CD8-positive, alpha-beta T cell (primary cell): ENCODE measurements at regions of chr14 and their contacts with region 1.

Region 1: DNA sequence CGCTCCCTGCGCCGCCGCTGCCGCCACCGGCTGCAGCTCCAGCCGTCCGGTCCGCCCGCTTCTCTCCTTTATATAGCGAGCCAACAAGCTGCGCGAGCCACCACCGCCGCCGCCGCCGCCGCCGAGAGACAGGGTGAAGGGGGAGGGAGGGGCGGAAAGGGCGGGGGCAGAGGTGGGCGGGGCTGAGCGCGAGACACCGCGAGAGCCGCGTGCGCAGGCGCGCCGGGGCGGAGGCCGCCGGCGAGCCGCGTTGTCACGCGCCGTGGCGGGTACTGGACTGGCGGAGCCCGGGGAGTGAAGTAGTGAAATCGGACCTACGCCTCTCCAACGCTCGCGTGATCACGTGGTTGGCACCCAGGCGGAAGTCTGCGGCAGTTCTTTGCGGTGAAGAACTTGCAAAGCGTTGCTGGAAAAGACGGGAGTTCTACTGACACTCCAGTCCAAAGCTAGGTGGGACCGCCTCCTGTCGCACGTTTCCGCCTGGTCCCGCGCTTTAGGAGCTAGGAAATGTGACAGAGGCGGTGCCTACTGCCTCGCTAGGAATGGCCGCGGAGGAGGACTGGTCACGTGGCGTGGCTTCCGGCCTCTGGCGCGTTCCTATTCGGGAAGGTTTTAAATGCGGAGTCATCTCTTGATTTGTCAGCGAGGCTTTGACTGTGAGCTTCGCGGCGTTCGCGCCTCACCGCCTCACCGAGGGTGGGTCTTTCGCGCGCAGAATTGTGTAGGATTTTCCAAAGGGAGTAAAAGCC is at the start of gene GTF2A1:
- DNase-seq: peak; percentile 91 to 98 (median 94)
- ATAC-seq: peak; percentile 69
- H3K4me3 ChIP-seq: peak within 1 kb of the TSS; percentile 93 to 94
- H3K4me3 Mint-ChIP-seq: peak within 1 kb of the TSS; percentile 99
- H3K27ac ChIP-seq: peak within 1 kb of the TSS; percentile 95 to 97
- H3K27ac Mint-ChIP-seq: peak within 1 kb of the TSS; percentile 100
- H3K4me1 ChIP-seq: peaks cover 31% of the 10 kb centered on the region
- H3K4me1 Mint-ChIP-seq: peaks cover 38% of the 10 kb centered on the region
- H3K27me3 ChIP-seq: no peaks in the 10 kb centered on the region
- H3K27me3 Mint-ChIP-seq: no peaks in the 10 kb centered on the region
- CTCF ChIP-seq: no peak
- total RNA-seq, gene GTF2A1: 12.6 to 14.6 TPM

Region 2: GRCh38 chr14:80941241-80942182 is 279.5 kb before region 1 on chr14 and contains the start of gene CEP128:
- CTCF ChIA-PET with region 1: no interaction called
- POLR2A ChIA-PET with region 1: interaction called, 12 read pairs
- intact Hi-C with region 1: loop called (anchors 1 to 5 kb)
- DNase-seq: peak; percentile 66 to 91 (median 83)
- ATAC-seq: peak; percentile 82
- H3K4me3 ChIP-seq: peak within 1 kb of the TSS; percentile 78
- H3K4me3 Mint-ChIP-seq: peak within 1 kb of the TSS; percentile 87
- H3K27ac ChIP-seq: peak within 1 kb of the TSS; percentile 26 to 36
- H3K27ac Mint-ChIP-seq: peak within 1 kb of the TSS; percentile 92
- H3K4me1 ChIP-seq: peaks cover 15% of the 10 kb centered on the region
- H3K4me1 Mint-ChIP-seq: peaks cover 29% of the 10 kb centered on the region
- H3K27me3 ChIP-seq: no peaks in the 10 kb centered on the region
- H3K27me3 Mint-ChIP-seq: peaks cover 2% of the 10 kb centered on the region
- CTCF ChIP-seq: no peak
- total RNA-seq, gene CEP128: 7.6 to 9.8 TPM

Region 3: GRCh38 chr14:81055971-81056370 is 165.0 kb before region 1 on chr14:
- CTCF ChIA-PET with region 1: no interaction called
- POLR2A ChIA-PET with region 1: no interaction called
- intact Hi-C with region 1: no loop called
- DNase-seq: no peak
- ATAC-seq: no peak
- H3K4me3 ChIP-seq: no peak overlapping the region
- H3K4me3 Mint-ChIP-seq: no peak overlapping the region
- H3K27ac ChIP-seq: no peak overlapping the region
- H3K27ac Mint-ChIP-seq: no peak overlapping the region
- H3K4me1 ChIP-seq: no peaks in the 10 kb centered on the region
- H3K4me1 Mint-ChIP-seq: no peaks in the 10 kb centered on the region
- H3K27me3 ChIP-seq: no peaks in the 10 kb centered on the region
- H3K27me3 Mint-ChIP-seq: no peaks in the 10 kb centered on the region
- CTCF ChIP-seq: no peak

Region 4: DNA sequence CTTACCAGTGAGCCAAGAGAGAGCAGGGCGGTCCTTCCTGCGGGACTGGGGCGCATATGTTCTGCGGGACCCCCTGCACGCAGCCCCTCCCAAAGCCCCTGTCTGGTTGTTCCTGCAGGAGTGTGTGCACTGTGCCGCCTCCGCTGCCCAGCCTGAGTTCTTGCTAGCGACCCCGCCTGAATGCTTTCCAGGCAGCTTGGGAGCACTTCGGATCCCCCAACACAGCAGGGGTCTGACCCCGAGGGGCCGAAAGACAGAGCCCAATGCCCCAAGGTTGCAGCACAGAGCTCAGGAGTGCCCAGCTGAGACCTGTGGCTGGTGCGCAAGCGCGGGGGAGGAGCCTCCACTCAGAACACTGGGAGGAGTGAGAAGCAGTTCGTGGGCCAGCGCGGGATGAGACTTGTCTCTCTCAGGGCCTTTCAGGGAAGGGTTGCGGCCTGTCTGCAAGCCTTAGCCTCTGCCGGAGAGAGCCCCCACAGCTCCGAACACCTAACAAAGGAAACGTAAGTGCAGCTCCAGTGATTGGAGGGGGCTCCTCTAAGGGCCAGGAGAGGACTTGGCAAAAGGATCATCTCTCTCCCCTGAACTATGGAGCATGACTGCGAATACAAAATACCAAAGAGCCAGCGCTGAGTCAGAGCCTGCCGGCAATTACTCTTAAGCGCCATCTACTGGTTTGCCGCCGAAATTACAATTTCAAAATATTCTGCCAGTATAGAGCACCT is 50.7 kb before region 1 on chr14:
- CTCF ChIA-PET with region 1: interaction called, 3 read pairs
- POLR2A ChIA-PET with region 1: interaction called, 17 read pairs
- intact Hi-C with region 1: loop called (anchors 1 kb)
- DNase-seq: peak; percentile 72 to 92 (median 89)
- ATAC-seq: peak; percentile 97
- H3K4me3 ChIP-seq: peak overlapping the region; percentile 67 to 70
- H3K4me3 Mint-ChIP-seq: peak overlapping the region; percentile 94
- H3K27ac ChIP-seq: peak overlapping the region; percentile 53 to 81
- H3K27ac Mint-ChIP-seq: peak overlapping the region; percentile 97
- H3K4me1 ChIP-seq: peaks cover 12% of the 10 kb centered on the region
- H3K4me1 Mint-ChIP-seq: peaks cover 20% of the 10 kb centered on the region
- H3K27me3 ChIP-seq: no peaks in the 10 kb centered on the region
- H3K27me3 Mint-ChIP-seq: no peaks in the 10 kb centered on the region
- CTCF ChIP-seq: peak; percentile 77

Region 5: DNA sequence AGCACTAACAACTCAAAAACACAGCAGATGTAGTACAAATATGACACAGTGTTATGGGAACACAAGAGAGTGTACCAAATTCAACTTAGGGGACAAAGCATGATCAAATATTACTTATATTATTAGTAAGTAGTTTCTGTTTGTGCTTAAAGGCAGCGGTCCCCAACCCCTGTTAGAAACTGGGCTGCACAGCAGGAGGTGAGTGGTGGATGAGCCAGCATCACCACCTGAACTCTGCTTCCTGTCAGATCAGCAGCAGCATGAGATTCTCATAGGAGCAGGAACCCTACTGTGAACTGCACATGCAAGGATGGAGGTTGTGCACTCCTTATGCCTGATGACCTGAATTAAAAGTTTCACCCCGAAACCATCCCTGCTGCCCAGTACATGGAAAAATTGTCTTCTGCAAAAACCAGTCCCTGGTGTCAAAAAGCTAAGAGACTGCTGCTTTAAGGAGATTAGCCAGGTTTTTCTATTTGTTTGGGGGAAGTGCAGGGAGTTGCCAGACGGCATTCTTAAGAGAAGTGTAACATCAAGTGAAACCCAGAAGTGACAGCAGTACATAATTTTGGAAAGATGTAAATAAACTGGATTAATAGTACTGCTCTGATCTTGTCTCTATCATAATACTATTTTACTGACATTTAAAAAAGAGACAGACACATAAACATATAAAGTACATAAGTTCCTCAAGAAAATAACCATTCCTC is 26.9 kb before region 1 on chr14:
- CTCF ChIA-PET with region 1: no interaction called
- POLR2A ChIA-PET with region 1: interaction called, 6 read pairs
- intact Hi-C with region 1: loop called in 1 of 2 experiments (anchors 2 kb)
- DNase-seq: no peak
- ATAC-seq: peak; percentile 34
- H3K4me3 ChIP-seq: no peak overlapping the region
- H3K4me3 Mint-ChIP-seq: no peak overlapping the region
- H3K27ac ChIP-seq: no peak overlapping the region
- H3K27ac Mint-ChIP-seq: peak overlapping the region; percentile 75
- H3K4me1 ChIP-seq: peaks cover 15% of the 10 kb centered on the region
- H3K4me1 Mint-ChIP-seq: peaks cover 51% of the 10 kb centered on the region
- H3K27me3 ChIP-seq: no peaks in the 10 kb centered on the region
- H3K27me3 Mint-ChIP-seq: no peaks in the 10 kb centered on the region
- CTCF ChIP-seq: no peak

Region 6: GRCh38 chr14:81464247-81465002 is 243.4 kb after region 1 on chr14:
- CTCF ChIA-PET with region 1: no interaction called
- POLR2A ChIA-PET with region 1: interaction called, 9 read pairs
- intact Hi-C with region 1: loop called in 1 of 2 experiments (anchors 1 kb)
- DNase-seq: peak; percentile 26 to 84 (median 58)
- ATAC-seq: peak; percentile 81
- H3K4me3 ChIP-seq: peak overlapping the region; percentile 63 to 68
- H3K4me3 Mint-ChIP-seq: peak overlapping the region; percentile 86
- H3K27ac ChIP-seq: peak overlapping the region; percentile 55 to 86
- H3K27ac Mint-ChIP-seq: peak overlapping the region; percentile 87
- H3K4me1 ChIP-seq: no peaks in the 10 kb centered on the region
- H3K4me1 Mint-ChIP-seq: peaks cover 10% of the 10 kb centered on the region
- H3K27me3 ChIP-seq: no peaks in the 10 kb centered on the region
- H3K27me3 Mint-ChIP-seq: no peaks in the 10 kb centered on the region
- CTCF ChIP-seq: peak; percentile 95

Region 7: GRCh38 chr14:81474148-81474492 is 253.1 kb after region 1 on chr14:
- CTCF ChIA-PET with region 1: no interaction called
- POLR2A ChIA-PET with region 1: interaction called, 4 read pairs
- intact Hi-C with region 1: loop called in 1 of 2 experiments (anchors 5 kb)
- DNase-seq: peak in 2 of 9 experiments; percentile 29 to 58
- ATAC-seq: peak; percentile 62
- H3K4me3 ChIP-seq: peak overlapping the region; percentile 10 to 31
- H3K4me3 Mint-ChIP-seq: peak overlapping the region; percentile 77
- H3K27ac ChIP-seq: peak overlapping the region; percentile 34 to 80
- H3K27ac Mint-ChIP-seq: peak overlapping the region; percentile 91
- H3K4me1 ChIP-seq: peaks cover 19% of the 10 kb centered on the region
- H3K4me1 Mint-ChIP-seq: peaks cover 24% of the 10 kb centered on the region
- H3K27me3 ChIP-seq: no peaks in the 10 kb centered on the region
- H3K27me3 Mint-ChIP-seq: no peaks in the 10 kb centered on the region
- CTCF ChIP-seq: no peak

Region 8: GRCh38 chr14:81533536-81534343 is 312.7 kb after region 1 on chr14 and contains the start of gene SEL1L:
- CTCF ChIA-PET with region 1: no interaction called
- POLR2A ChIA-PET with region 1: interaction called, 15 read pairs
- intact Hi-C with region 1: loop called in 1 of 2 experiments (anchors 2 kb)
- DNase-seq: peak; percentile 99 to 100 (median 99)
- ATAC-seq: peak; percentile 95
- H3K4me3 ChIP-seq: peak within 1 kb of the TSS; percentile 84 to 88
- H3K4me3 Mint-ChIP-seq: peak within 1 kb of the TSS; percentile 99
- H3K27ac ChIP-seq: peak within 1 kb of the TSS; percentile 70
- H3K27ac Mint-ChIP-seq: peak within 1 kb of the TSS; percentile 91
- H3K4me1 ChIP-seq: peaks cover 29% of the 10 kb centered on the region
- H3K4me1 Mint-ChIP-seq: peaks cover 65% of the 10 kb centered on the region
- H3K27me3 ChIP-seq: no peaks in the 10 kb centered on the region
- H3K27me3 Mint-ChIP-seq: no peaks in the 10 kb centered on the region
- CTCF ChIP-seq: no peak
- total RNA-seq, gene SEL1L: 41.2 to 46.5 TPM